Activated CD4-positive, alpha-beta memory T cell treated with anti-CD3 and anti-CD28 coated beads, Interleukin-2, amount 10 ng/mL, durations not matched to agents 7 days and 5 days (primary cell): ENCODE measurements at regions of chr6 and their contacts with region 1.

Region 1: GRCh38 chr6:42043787-42044475 is 6.4 kb upstream of the TAF8 start:
- DNase-seq: peak; percentile 95
- H3K4me3 Mint-ChIP-seq: peak overlapping the region; percentile 54
- H3K27ac Mint-ChIP-seq: peak overlapping the region; percentile 96
- H3K4me1 Mint-ChIP-seq: peaks cover 91% of the 10 kb centered on the region
- H3K27me3 Mint-ChIP-seq: no peaks in the 10 kb centered on the region

Region 2: GRCh38 chr6:41735427-41736356 is 308.2 kb before region 1 on chr6 and contains the start of gene TFEB:
- CTCF ChIA-PET with region 1: interaction called, 12 read pairs
- POLR2A ChIA-PET with region 1: no interaction called
- DNase-seq: peak; percentile 95
- H3K4me3 Mint-ChIP-seq: peak within 1 kb of the TSS; percentile 79
- H3K27ac Mint-ChIP-seq: peak within 1 kb of the TSS; percentile 64
- H3K4me1 Mint-ChIP-seq: peaks cover 30% of the 10 kb centered on the region
- H3K27me3 Mint-ChIP-seq: peaks cover 2% of the 10 kb centered on the region
- total RNA-seq, gene TFEB: 14.9 to 15.0 TPM

Region 3: DNA sequence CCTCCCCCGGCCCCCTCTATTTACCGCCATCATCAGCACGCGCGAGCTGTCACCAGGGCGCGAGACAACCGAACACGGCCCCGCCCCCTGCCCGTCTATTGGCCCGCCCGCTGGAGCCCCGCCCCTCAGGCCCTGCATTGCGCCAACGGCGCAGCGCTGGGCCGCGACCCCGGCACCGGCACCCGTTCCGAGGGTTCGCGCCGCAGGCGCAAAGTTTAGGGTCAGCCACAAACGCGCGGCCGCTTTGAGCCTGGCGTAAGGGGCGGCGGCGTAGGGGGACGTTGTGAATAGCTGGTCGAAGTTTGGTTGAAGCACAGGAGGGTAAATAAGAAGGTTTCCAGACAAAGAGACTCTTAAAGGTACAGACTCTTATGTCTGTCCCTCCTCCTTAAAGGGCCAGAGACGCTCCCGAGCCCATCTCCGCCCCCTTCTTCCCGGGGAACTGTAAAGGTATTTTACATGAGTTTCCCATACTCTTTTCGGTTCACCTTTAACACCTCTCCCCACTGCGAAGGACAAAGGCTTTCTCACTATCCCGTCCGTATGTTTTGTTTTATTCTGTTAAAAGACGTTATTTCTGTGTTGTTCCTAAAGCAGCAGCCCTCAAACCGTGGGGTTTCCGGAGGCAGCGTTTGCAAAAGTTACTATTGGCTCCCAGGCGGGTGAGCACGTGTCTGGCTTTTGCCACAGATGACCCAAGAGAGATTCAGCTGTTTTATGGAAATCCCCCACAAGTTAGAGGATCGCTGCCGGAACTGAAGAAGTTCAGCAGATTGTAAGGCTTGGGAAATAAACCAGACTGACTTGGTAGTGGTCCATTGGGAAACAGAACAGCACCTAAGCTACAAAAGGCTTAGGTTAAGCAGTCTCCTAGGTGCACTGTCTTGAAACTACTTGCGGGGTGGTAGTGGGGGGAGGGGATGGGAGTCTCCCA is 148.4 kb before region 1 on chr6 and contains the start of gene USP49:
- CTCF ChIA-PET with region 1: interaction called, 15 read pairs
- POLR2A ChIA-PET with region 1: interaction called, 7 read pairs
- DNase-seq: peak; percentile 91
- H3K4me3 Mint-ChIP-seq: no peak within 1 kb of the TSS
- H3K27ac Mint-ChIP-seq: peak within 1 kb of the TSS; percentile 66
- H3K4me1 Mint-ChIP-seq: peaks cover 15% of the 10 kb centered on the region
- H3K27me3 Mint-ChIP-seq: no peaks in the 10 kb centered on the region
- total RNA-seq, gene USP49: 6.8 to 7.3 TPM

Region 4: GRCh38 chr6:41914869-41915530 is 128.9 kb before region 1 on chr6:
- CTCF ChIA-PET with region 1: interaction called, 199 read pairs
- POLR2A ChIA-PET with region 1: interaction called, 71 read pairs
- DNase-seq: no peak
- H3K4me3 Mint-ChIP-seq: no peak overlapping the region
- H3K27ac Mint-ChIP-seq: peak overlapping the region; percentile 27
- H3K4me1 Mint-ChIP-seq: peaks cover 41% of the 10 kb centered on the region
- H3K27me3 Mint-ChIP-seq: no peaks in the 10 kb centered on the region

Region 5: DNA sequence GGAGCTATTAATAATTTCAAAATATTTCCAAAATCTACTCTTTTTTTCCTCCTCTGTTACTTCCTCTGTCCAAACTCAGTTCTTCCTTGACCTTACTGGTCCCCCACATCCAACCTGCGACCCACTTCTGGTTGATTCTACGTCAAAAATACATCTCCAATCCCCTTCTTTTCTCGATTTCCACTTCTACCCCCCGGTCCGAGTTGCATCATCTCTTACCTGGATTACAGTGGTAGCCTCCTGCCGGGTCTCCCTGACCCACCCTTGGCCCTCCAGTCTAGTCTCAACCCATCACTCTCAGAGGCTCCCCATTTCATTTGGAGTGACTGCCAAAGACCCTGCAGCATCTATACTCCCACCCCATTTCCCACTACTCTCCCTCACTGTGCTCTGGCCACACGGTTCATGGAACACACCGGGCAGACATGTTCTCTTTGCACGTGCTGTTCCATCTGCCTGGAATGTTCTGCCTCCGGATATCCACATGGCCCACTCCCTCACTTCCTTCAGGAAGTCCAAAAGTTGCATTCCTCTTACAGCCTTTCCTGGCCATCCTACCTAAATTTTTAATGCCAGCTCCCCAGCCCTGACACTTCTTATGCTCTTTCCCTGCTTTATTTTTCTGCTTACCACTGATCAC is 96.2 kb before region 1 on chr6:
- CTCF ChIA-PET with region 1: interaction called, 383 read pairs
- POLR2A ChIA-PET with region 1: interaction called, 553 read pairs
- DNase-seq: no peak
- H3K4me3 Mint-ChIP-seq: no peak overlapping the region
- H3K27ac Mint-ChIP-seq: no peak overlapping the region
- H3K4me1 Mint-ChIP-seq: peaks cover 7% of the 10 kb centered on the region
- H3K27me3 Mint-ChIP-seq: no peaks in the 10 kb centered on the region

Region 6: GRCh38 chr6:42021847-42022754 is 21.8 kb before region 1 on chr6:
- CTCF ChIA-PET with region 1: interaction called, 28 read pairs
- POLR2A ChIA-PET with region 1: interaction called, 74 read pairs
- DNase-seq: peak; percentile 80
- H3K4me3 Mint-ChIP-seq: peak overlapping the region; percentile 65
- H3K27ac Mint-ChIP-seq: peak overlapping the region; percentile 95
- H3K4me1 Mint-ChIP-seq: peaks cover 74% of the 10 kb centered on the region
- H3K27me3 Mint-ChIP-seq: no peaks in the 10 kb centered on the region

Region 7: DNA sequence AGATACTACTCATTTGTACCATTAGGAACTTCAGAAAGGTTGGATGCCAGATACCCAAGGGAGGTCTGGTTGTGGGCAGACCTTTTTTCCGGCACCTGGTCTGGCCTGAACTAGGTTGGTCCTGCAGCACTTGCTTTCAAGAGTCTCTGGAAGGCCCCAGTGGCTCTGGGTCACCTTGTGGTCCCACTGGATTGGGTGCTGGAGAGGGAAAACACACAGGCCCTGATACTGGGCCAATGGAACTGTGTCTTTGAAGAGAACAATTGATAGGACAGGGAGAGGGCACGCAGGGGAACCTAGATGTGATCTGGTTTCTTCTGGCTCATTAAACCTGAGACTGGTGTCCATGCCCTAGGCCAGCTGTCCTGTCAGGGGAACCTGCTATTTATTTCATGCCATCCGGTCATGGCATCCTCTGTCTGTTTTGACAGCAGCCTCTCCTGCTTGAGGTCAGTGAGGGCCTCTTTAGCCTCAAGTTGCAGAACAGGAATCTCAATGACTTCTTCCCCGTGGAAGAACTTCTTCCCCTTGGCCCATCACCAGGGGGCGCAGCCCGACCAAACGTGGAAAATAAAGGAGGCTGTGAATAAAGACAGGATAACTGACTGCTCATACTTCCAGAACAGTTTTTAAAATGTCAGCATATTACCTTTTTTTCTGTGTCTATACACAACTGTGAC is 31.4 kb after region 1 on chr6:
- CTCF ChIA-PET with region 1: no interaction called
- POLR2A ChIA-PET with region 1: no interaction called
- DNase-seq: peak; percentile 69
- H3K4me3 Mint-ChIP-seq: no peak overlapping the region
- H3K27ac Mint-ChIP-seq: no peak overlapping the region
- H3K4me1 Mint-ChIP-seq: peaks cover 18% of the 10 kb centered on the region
- H3K27me3 Mint-ChIP-seq: no peaks in the 10 kb centered on the region

Region 8: DNA sequence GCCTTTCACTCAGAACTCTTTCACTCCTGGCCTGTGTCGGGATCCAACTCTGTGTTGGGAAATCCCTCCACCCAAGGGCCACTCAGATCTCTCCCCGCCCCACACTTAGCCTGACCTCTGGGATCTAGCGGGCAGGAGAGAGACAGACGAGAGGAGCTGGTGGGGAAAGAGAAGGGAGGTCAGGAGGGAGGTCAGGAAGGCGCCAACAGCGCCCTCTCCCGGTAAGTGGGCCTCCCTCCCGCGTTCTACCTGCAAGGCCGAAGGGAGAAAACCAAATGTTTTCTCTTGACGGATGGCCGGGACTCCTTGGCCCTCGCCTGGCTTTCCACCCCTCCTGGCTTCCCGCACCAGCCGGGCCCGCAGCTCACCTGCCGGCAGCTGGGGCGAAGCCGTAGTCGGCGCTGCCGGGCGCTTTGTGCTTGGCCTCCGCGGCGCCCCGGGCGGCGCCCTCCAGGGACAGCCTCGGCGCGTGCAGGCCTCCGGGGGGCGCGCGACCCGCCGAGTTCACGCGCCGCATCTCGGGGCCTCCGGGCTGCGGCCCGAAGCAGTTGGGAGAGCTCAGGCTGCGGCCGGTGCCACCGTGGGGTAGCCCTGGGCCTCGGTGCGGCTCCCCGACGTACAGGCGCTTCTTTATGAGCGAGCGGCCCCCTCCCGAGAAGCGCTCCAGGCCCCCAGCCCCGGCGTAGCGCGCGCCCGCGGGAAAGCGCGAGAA is 60.3 kb after region 1 on chr6:
- CTCF ChIA-PET with region 1: interaction called, 17 read pairs
- POLR2A ChIA-PET with region 1: interaction called, 3 read pairs
- DNase-seq: peak; percentile 79
- H3K4me3 Mint-ChIP-seq: peak overlapping the region; percentile 67
- H3K27ac Mint-ChIP-seq: peak overlapping the region; percentile 57
- H3K4me1 Mint-ChIP-seq: peaks cover 42% of the 10 kb centered on the region
- H3K27me3 Mint-ChIP-seq: peaks cover 2% of the 10 kb centered on the region